ENCODE measurements at regions of chr3 and their contacts with region 1.

Region 1: GRCh38 chr3:160565442-160566403 is at the start of gene KPNA4:
- DNase-seq: peak; percentile 96 to 98 (median 97)
- ATAC-seq: peak; percentile 95
- H3K4me3 ChIP-seq: peak within 1 kb of the TSS; percentile 86
- H3K4me3 Mint-ChIP-seq: peak within 1 kb of the TSS; percentile 86 to 98 (median 97)
- H3K27ac ChIP-seq: peak within 1 kb of the TSS; percentile 95
- H3K27ac Mint-ChIP-seq: peak within 1 kb of the TSS; percentile 91 to 97 (median 95)
- H3K4me1 ChIP-seq: peaks cover 16 to 19% of the 10 kb centered on the region in 2 donors
- H3K4me1 Mint-ChIP-seq: peaks cover 40 to 58% (median 54%) of the 10 kb centered on the region in 7 donors
- H3K27me3 ChIP-seq: no peaks in the 10 kb centered on the region
- H3K27me3 Mint-ChIP-seq: peaks cover 0 to 2% (median 0%) of the 10 kb centered on the region in 5 donors
- total RNA-seq, gene KPNA4: 38.3 to 55.4 (median 45.9) TPM

Region 2: GRCh38 chr3:159910991-159911663 is 654.6 kb before region 1 on chr3:
- CTCF ChIA-PET with region 1: no interaction called
- POLR2A ChIA-PET with region 1: no interaction called
- intact Hi-C with region 1: loop called in 1 of 2 experiments (anchors 10 kb)
- DNase-seq: peak in 1 of 9 donors; percentile 7
- ATAC-seq: no peak
- H3K4me3 ChIP-seq: peak overlapping the region; percentile 14
- H3K4me3 Mint-ChIP-seq: peak overlapping the region; percentile 48 to 85 (median 64)
- H3K27ac ChIP-seq: no peak overlapping the region
- H3K27ac Mint-ChIP-seq: peak overlapping the region in 7 of 9 donors; percentile 12 to 73 (median 38)
- H3K4me1 ChIP-seq: peaks cover 0 to 3% of the 10 kb centered on the region in 2 donors
- H3K4me1 Mint-ChIP-seq: peaks cover 6 to 21% (median 12%) of the 10 kb centered on the region in 7 donors
- H3K27me3 ChIP-seq: no peaks in the 10 kb centered on the region
- H3K27me3 Mint-ChIP-seq: peaks cover 0 to 14% (median 10%) of the 10 kb centered on the region in 5 donors

Region 3: DNA sequence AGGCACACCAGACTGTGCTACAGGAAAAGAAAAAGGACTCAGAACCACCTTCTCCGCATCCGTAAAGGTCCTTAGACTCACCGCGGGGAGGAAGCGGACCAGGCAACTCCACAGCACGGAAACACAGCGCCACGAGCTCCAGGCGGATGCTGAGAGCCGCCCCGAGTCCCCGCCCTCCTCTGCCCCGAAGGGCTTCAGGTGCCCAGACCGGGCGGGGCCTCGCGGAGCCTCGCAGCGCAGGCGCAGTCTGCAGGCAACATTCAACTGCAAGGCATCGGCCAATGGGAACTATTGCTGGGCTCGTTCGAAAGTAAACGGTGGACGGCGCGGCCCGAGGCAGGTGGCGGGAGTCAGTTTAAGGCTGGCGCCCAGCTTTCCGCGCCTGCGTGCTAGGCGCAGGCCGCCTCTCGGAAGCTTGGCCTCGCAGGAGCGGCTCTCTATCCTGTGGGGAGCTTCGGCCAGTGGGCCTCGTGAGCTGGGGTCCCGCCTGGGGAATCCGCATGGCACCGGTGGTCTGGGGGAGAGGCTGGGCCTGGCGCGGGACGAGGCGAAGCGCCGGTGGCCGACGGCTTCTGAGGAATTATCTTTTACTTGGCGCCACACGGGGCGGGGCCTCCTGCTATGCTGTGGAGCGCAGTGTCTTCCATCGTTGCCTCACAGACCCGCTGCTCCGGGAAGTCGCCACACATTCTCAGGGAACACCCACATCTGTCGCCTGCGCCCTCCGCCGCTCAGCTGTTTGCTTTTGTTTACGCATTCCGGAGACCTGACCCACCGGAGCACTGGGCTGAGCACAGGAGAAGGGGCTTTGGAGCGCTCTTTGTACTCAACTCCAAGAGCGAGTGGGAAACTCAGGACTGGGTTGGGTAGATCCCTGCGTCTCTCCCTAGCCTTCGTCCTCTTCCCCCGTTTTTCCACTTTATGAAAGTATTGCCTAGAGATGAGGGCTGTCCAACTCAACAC is 115.8 kb before region 1 on chr3 and contains the start of gene TRIM59:
- CTCF ChIA-PET with region 1: no interaction called
- POLR2A ChIA-PET with region 1: interaction called, 7 read pairs
- intact Hi-C with region 1: loop called (anchors 1 kb)
- DNase-seq: peak; percentile 90 to 96 (median 93)
- ATAC-seq: peak; percentile 97
- H3K4me3 ChIP-seq: peak within 1 kb of the TSS; percentile 90
- H3K4me3 Mint-ChIP-seq: peak within 1 kb of the TSS; percentile 92 to 100 (median 96)
- H3K27ac ChIP-seq: peak within 1 kb of the TSS; percentile 74
- H3K27ac Mint-ChIP-seq: peak within 1 kb of the TSS; percentile 88 to 96 (median 92)
- H3K4me1 ChIP-seq: peaks cover 10 to 14% of the 10 kb centered on the region in 2 donors
- H3K4me1 Mint-ChIP-seq: peaks cover 8 to 47% (median 40%) of the 10 kb centered on the region in 7 donors
- H3K27me3 ChIP-seq: no peaks in the 10 kb centered on the region
- H3K27me3 Mint-ChIP-seq: peaks cover 0 to 8% (median 0%) of the 10 kb centered on the region in 5 donors
- total RNA-seq, gene TRIM59: 9.8 to 49.2 (median 17.5) TPM

Region 4: DNA sequence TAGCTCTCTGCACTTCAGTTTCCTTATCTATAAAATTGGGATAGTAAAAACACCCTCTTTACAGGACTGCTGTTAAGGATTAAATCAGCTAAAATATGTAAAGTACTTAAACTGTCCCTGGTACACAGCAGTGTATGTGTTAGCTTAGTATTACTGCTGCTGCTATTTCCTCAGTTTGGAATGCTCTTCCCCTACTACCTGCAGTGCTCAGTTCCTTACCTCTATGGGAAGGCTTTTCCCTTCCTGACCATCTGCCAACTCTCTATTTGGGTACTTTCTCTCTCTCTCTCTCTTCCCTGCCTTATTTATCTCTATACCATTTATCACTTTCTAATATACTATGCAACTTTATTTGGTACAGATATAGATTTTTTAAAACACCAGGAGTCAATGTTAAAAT is 26.8 kb before region 1 on chr3:
- CTCF ChIA-PET with region 1: no interaction called
- POLR2A ChIA-PET with region 1: no interaction called
- intact Hi-C with region 1: loop called (anchors 2 kb)
- DNase-seq: no peak
- ATAC-seq: peak; percentile 31
- H3K4me3 ChIP-seq: no peak overlapping the region
- H3K4me3 Mint-ChIP-seq: peak overlapping the region in 1 of 10 donors; percentile 0
- H3K27ac ChIP-seq: no peak overlapping the region
- H3K27ac Mint-ChIP-seq: peak overlapping the region in 5 of 9 donors; percentile 3 to 59 (median 11)
- H3K4me1 ChIP-seq: peaks cover 0 to 2% of the 10 kb centered on the region in 2 donors
- H3K4me1 Mint-ChIP-seq: peaks cover 9 to 63% (median 51%) of the 10 kb centered on the region in 7 donors
- H3K27me3 ChIP-seq: no peaks in the 10 kb centered on the region
- H3K27me3 Mint-ChIP-seq: no peaks in the 10 kb centered on the region

Region 5: DNA sequence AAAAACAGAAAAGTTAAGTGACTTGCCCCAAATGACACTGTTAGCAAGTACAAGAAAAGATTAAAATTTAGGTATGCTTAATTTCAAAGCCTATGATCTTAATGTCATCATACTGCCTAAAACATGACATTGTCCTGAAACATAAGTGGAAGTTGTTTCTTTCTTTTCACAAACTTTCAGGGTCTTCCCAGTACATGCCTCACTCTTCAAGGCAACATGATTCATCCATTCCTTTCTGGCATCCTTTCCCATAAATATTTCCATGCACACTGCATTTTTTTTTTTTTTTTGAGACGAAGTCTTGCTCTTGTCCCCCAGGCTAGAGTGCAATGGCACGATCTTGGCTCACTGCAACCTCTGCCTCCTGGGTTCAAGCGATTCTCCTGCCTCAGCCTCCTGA is 42.1 kb after region 1 on chr3:
- CTCF ChIA-PET with region 1: no interaction called
- POLR2A ChIA-PET with region 1: no interaction called
- intact Hi-C with region 1: no loop called
- DNase-seq: no peak
- ATAC-seq: no peak
- H3K4me3 ChIP-seq: no peak overlapping the region
- H3K4me3 Mint-ChIP-seq: no peak overlapping the region
- H3K27ac ChIP-seq: no peak overlapping the region
- H3K27ac Mint-ChIP-seq: no peak overlapping the region
- H3K4me1 ChIP-seq: no peaks in the 10 kb centered on the region
- H3K4me1 Mint-ChIP-seq: no peaks in the 10 kb centered on the region
- H3K27me3 ChIP-seq: no peaks in the 10 kb centered on the region
- H3K27me3 Mint-ChIP-seq: peaks cover 0 to 18% (median 4%) of the 10 kb centered on the region in 5 donors

Region 6: DNA sequence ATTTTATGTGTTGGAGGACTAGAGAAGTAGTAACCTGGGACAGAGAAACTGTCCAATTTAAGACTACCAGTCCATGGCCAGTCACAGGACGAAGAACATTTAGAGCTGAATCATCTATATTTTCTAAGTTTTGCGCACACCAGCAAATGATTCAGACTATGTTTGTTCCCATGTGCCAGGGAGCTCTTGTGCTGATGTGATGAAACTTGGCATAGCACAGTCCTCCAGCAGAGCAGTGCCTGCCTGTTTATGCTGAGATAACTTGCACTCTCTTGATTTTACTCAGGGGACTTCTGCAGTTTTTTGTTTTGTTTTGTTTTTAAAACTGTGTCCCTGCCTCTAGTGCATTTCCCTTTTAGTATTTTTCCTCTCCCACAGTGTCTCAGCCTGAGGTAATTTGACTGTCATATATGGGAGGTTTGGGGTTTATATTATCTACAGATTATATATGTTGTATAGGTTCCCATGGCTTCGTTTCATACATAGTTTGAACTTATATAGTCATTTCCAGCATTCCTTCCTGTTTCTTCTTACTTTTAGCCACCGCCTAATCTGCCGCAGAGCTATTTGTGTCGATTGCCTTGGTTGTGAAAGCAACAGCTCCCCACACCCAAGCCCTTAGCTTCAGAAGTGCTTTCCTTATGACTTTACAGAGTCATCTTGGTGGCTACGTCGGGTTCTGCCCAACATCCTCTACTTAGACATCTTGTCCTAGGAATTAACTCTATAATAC is 235.8 kb after region 1 on chr3:
- CTCF ChIA-PET with region 1: no interaction called
- POLR2A ChIA-PET with region 1: no interaction called
- intact Hi-C with region 1: loop called in 1 of 2 experiments (anchors 1 kb)
- DNase-seq: peak in 7 of 9 donors; percentile 1 to 59 (median 10)
- ATAC-seq: peak; percentile 87
- H3K4me3 ChIP-seq: no peak overlapping the region
- H3K4me3 Mint-ChIP-seq: peak overlapping the region in 8 of 10 donors; percentile 7 to 67 (median 54)
- H3K27ac ChIP-seq: no peak overlapping the region
- H3K27ac Mint-ChIP-seq: peak overlapping the region in 4 of 9 donors; percentile 10 to 92 (median 72)
- H3K4me1 ChIP-seq: peaks cover 0 to 5% of the 10 kb centered on the region in 2 donors
- H3K4me1 Mint-ChIP-seq: peaks cover 0 to 26% (median 10%) of the 10 kb centered on the region in 7 donors
- H3K27me3 ChIP-seq: no peaks in the 10 kb centered on the region
- H3K27me3 Mint-ChIP-seq: peaks cover 0 to 11% (median 7%) of the 10 kb centered on the region in 5 donors

Region 7: GRCh38 chr3:160981217-160981938 is 415.7 kb after region 1 on chr3:
- CTCF ChIA-PET with region 1: no interaction called
- POLR2A ChIA-PET with region 1: no interaction called
- intact Hi-C with region 1: no loop called
- DNase-seq: peak in 2 of 9 donors; percentile 3 to 4
- ATAC-seq: peak; percentile 89
- H3K4me3 ChIP-seq: no peak overlapping the region
- H3K4me3 Mint-ChIP-seq: no peak overlapping the region
- H3K27ac ChIP-seq: no peak overlapping the region
- H3K27ac Mint-ChIP-seq: no peak overlapping the region
- H3K4me1 ChIP-seq: no peaks in the 10 kb centered on the region
- H3K4me1 Mint-ChIP-seq: peaks cover 0 to 23% (median 12%) of the 10 kb centered on the region in 7 donors
- H3K27me3 ChIP-seq: no peaks in the 10 kb centered on the region
- H3K27me3 Mint-ChIP-seq: peaks cover 0 to 7% (median 0%) of the 10 kb centered on the region in 5 donors